Adrenal gland (tissue), 19 donors: ENCODE measurements at regions of chr17 and their contacts with region 1.

Region 1: DNA sequence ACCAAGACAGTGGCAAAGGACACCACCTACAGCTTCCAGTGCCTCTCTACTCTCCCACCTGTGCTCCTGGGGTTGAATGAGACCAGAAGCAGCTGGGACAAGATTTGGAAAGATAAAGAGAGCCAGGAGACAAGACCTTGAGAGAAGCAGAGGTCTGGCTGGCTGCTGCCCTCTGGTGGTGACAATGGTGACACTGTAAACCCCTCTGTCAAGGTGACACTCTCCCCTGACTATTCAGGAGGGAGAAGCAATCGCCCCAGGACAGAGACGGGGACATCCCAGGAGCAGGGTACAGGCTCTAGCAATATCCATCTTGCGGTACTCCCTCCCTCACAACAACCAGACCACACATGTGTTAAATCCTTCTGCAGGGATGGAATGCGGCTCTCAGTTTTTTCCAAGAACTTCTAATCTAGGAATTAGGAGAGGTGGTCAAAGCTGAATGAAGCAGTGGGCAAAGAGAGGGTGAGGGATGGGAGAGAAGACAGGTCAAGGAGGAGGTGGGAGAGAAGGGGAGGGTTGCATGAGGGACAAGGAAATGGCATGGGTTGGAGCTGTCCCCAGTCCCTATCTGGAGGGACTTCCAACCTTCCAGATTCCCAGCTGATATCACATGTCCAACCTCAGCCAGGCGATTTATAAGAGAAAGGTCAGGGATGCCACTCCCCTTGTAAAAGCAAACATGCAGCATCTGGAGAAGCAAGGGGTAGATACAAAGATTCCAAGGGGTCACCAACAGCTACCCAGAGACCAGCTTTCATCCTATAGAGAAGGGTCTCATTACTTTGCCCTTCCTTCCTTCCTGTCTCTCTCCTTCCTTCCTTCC is 2.9 kb downstream of the PHOSPHO1 start:
- DNase-seq: peak; percentile 72 to 92 (median 83)
- H3K4me3 ChIP-seq: no peak overlapping the region
- H3K27ac ChIP-seq: no peak overlapping the region
- H3K4me1 ChIP-seq: peaks cover 10 to 21% of the 10 kb centered on the region in 2 donors
- H3K27me3 ChIP-seq: peaks cover 18% of the 10 kb centered on the region
- CTCF ChIP-seq: peak; percentile 77 to 83 (median 80)
- POLR2A ChIP-seq: no peak

Region 2: GRCh38 chr17:49180303-49180702 is 47.3 kb before region 1 on chr17:
- intact Hi-C with region 1: loop called (anchors 5 kb)
- DNase-seq: peak; percentile 57 to 86 (median 74)
- H3K4me3 ChIP-seq: no peak overlapping the region
- H3K27ac ChIP-seq: no peak overlapping the region
- H3K4me1 ChIP-seq: no peaks in the 10 kb centered on the region
- H3K27me3 ChIP-seq: no peaks in the 10 kb centered on the region
- CTCF ChIP-seq: peak; percentile 65 to 87 (median 80)
- POLR2A ChIP-seq: no peak

Region 3: GRCh38 chr17:49290690-49291359 is 63.2 kb after region 1 on chr17:
- intact Hi-C with region 1: loop called in 1 of 2 experiments (anchors 5 kb)
- DNase-seq: peak in 1 of 7 donors; percentile 32
- H3K4me3 ChIP-seq: no peak overlapping the region
- H3K27ac ChIP-seq: no peak overlapping the region
- H3K4me1 ChIP-seq: no peaks in the 10 kb centered on the region
- H3K27me3 ChIP-seq: no peaks in the 10 kb centered on the region
- CTCF ChIP-seq: peak; percentile 54 to 69 (median 56)
- POLR2A ChIP-seq: no peak